ENCODE measurements at regions of chr13 and their contacts with region 1.

Region 1: GRCh38 chr13:94674609-94675348 is 37.6 kb downstream of the SOX21 start:
- DNase-seq: no peak
- H3K4me3 ChIP-seq: no peak overlapping the region
- H3K27me3 ChIP-seq: peaks cover 2% of the 10 kb centered on the region
- CTCF ChIP-seq: peak; percentile 76

Region 2: GRCh38 chr13:94660695-94661326 is 14.0 kb before region 1 on chr13:
- CTCF ChIA-PET with region 1: interaction called, 59 read pairs
- POLR2A ChIA-PET with region 1: no interaction called
- DNase-seq: no peak
- H3K4me3 ChIP-seq: no peak overlapping the region
- H3K27me3 ChIP-seq: peaks cover 23% of the 10 kb centered on the region
- CTCF ChIP-seq: peak; percentile 46

Region 3: GRCh38 chr13:95156208-95156607 is 481.4 kb after region 1 on chr13:
- CTCF ChIA-PET with region 1: interaction called, 27 read pairs
- POLR2A ChIA-PET with region 1: no interaction called
- DNase-seq: no peak
- H3K4me3 ChIP-seq: no peak overlapping the region
- H3K27me3 ChIP-seq: no peaks in the 10 kb centered on the region
- CTCF ChIP-seq: peak; percentile 41

Measured in BJ (cell line).